Mammary epithelial cell (primary cell): ENCODE measurements at regions of chr12 and their contacts with region 1.

Region 1: GRCh38 chr12:104921340-104921739 is 36.8 kb downstream of the SLC41A2 start:
- DNase-seq: no peak
- H3K4me3 ChIP-seq: no peak overlapping the region
- H3K27ac ChIP-seq: no peak overlapping the region
- H3K4me1 ChIP-seq: no peaks in the 10 kb centered on the region
- H3K27me3 ChIP-seq: no peaks in the 10 kb centered on the region
- CTCF ChIP-seq: no peak

Region 2: DNA sequence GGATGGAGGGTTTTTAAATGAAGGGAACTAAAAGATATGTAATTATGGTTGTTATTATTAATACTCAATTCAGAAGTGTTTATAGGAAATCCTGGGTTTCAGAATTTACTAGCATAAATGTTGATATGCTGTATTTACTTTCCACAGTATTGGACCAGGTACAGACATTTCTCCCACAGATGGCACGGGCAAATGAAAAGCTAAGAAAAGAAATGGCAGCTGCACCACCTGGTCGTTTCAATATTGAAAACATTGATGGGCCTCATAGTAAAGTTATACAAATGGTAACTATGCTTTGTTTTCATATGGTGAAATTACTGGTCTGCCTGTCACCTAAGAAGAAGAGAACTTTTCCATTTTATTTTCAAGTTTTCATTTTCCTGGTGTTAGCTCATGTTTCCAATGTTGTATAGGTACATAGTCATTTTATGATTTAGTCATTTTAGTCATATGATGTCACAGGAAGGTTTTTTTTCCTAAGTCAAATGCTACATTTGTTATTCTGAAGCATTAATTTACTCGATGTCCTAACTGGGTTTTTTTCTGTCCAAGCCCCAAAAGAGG is 70.3 kb after region 1 on chr12:
- CTCF ChIA-PET with region 1: no interaction called
- dilution Hi-C with region 1: loop called (anchors 5 kb)
- in situ Hi-C with region 1: no loop called
- intact Hi-C with region 1: no loop called
- DNase-seq: no peak
- H3K4me3 ChIP-seq: no peak overlapping the region
- H3K27ac ChIP-seq: no peak overlapping the region
- H3K4me1 ChIP-seq: peaks cover 8% of the 10 kb centered on the region
- H3K27me3 ChIP-seq: no peaks in the 10 kb centered on the region
- CTCF ChIP-seq: no peak